ENCODE measurements at regions of chr3 and their contacts with region 1.

Region 1: DNA sequence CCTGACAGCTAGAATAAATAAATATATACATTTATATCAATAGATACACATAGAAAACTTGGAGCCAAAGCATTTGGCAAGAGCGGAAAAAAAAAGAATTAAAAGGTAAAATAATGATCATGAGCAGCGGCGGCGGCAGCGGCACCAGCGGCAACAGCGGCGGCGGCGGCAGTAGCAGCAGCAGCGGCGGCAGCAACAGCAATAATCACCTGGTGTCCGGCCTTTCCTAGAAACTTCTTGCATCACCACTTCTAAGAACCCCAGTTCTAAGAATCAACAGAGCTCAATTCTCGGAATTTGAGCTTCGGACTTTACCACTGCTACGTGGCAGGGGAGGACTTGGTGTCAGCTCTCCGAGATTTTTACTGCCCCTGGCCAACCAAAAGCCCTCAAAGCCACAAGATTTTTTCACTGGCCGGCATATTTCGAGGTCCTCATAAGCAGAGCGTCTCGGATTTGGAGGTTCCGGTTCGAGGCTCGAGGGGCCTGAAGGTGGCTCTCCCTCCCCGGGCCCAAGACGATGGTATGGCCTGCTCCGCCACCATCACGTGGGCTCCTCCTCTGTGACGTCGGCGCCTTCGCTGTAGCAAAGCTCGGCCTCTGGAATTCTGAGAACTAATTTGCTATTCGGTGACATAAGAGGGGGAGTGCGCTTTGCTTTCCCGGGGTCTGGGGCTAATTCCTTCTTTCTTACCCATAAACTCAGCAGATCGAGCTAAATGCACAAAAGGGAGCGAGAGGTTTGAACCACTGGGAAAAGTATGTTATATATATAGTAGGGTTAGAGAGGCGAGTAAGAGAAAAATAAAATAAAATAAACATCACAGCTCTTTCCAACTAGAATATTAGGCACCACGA is at the start of gene BCL6:
- DNase-seq: peak; percentile 94 to 99 (median 96)
- ATAC-seq: peak; percentile 70
- H3K4me3 ChIP-seq: peak within 1 kb of the TSS; percentile 56 to 57
- H3K27ac ChIP-seq: peak within 1 kb of the TSS; percentile 99
- H3K4me1 ChIP-seq: peaks cover 7 to 66% of the 10 kb centered on the region in 2 donors
- H3K27me3 ChIP-seq: no peaks in the 10 kb centered on the region
- CTCF ChIP-seq: no peak
- polyA plus RNA-seq, gene BCL6: 12.6 to 18.6 (median 15.8) TPM

Region 2: DNA sequence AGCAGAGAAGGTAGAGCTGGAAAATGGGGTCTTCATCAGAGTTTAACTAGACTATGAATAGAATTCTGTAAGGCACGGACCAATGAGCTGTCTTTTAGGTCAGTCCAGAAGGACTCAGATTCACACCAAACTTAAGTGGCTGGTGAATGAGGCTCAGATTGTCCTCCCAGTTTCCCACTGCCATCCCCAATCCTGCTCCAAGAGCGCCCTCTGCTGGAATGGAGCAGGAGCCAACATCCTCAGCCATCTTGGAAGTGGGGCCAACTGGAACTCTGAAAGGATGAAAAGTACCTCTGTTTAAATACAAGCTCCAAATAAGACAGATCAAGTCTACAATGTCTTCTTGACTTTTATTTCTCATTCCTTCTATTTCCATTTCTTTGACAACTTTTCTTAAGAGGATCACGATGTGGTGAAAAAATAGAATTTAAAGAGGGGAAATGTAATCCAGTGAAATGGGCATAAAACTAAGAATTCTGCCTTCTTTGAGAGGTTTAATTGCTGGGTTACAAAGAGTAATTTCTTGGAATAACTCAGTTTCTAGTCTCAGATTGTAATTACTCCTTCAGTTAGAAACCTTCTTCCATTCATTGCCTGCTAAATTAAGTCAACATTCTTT is 1209.3 kb after region 1 on chr3:
- intact Hi-C with region 1: loop called (anchors 5 to 10 kb)
- DNase-seq: peak; percentile 78 to 89 (median 86)
- ATAC-seq: peak; percentile 82
- H3K4me3 ChIP-seq: no peak overlapping the region
- H3K27ac ChIP-seq: no peak overlapping the region
- H3K4me1 ChIP-seq: peaks cover 11 to 55% of the 10 kb centered on the region in 2 donors
- H3K27me3 ChIP-seq: no peaks in the 10 kb centered on the region
- CTCF ChIP-seq: peak; percentile 91 to 92

Region 3: DNA sequence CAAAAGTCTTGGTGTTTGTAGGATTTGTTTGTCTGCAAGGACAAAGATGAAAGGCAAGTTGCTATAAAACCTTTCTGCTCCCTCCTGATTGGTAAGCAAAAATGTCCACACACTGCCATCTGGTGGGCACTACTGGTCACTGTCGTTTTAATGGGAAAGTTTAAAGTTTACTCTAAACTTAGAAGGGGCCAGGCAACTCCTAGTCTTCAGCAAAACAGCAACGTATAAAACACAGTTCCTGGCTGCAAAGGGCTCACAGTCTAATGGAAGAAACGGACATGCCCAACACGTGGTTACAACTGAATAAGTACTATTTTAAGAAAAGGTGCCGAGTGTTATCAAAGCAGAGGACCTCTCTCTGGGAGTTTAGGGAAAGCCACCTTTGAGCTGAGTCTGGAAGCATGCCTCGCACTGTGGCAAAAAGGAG is 1402.7 kb after region 1 on chr3:
- intact Hi-C with region 1: loop called in 1 of 2 experiments (anchors 10 kb)
- DNase-seq: peak in 3 of 4 donors; percentile 44 to 74 (median 58)
- ATAC-seq: peak; percentile 92
- H3K4me3 ChIP-seq: no peak overlapping the region
- H3K27ac ChIP-seq: no peak overlapping the region
- H3K4me1 ChIP-seq: peaks cover 0 to 28% of the 10 kb centered on the region in 2 donors
- H3K27me3 ChIP-seq: no peaks in the 10 kb centered on the region
- CTCF ChIP-seq: peak; percentile 65 to 76